SK-N-SH (cell line): ENCODE measurements at regions of chr10 and their contacts with region 1.

Region 1: DNA sequence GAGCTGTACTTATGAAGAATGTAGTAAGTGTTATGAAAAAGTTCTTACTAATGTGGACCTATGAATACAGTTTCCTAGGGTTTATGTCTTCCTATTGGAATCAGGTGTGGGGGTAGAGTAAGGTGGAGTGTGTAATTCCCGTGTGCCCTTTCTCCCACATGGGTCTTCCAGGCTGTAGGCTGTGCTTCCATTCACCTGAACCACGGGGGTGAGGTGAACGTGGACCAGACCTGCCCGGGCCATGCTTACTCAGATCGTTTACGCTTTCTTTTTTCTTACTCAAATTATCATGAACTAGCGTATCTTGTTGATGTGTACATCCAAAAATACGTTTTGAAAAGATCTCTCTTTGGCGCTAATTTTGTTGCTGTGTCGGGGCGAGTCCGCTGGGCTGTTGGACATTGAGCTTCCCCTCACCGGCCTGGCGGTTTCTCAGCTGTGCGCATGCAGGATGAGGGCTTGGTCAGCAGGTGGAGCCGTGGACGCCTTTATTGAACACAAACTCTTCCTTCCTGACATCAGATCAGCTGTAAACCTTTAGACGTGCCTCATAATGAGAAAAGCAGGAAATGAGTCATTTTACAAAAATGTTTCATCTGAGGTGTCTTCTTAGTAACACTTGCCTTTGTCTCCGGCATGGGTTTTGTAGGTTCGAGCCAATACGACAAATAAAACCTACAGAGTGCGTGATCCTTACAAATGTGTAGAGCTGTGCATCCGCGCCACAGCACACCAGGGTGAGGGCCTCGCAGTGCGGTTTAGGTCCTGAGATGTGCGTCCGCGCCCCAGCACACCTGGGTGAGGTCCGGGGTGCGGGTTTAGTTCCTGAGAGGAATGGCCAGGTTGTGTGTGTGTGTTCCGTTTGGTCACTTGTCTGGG is 53.8 kb downstream of the WDR37 start:
- DNase-seq: peak; percentile 88
- H3K4me3 ChIP-seq: peak overlapping the region in 1 of 2 experiments; percentile 14; a peak in 1 of 4 replicates
- H3K27ac ChIP-seq: peak overlapping the region; percentile 25 to 68; a peak in 2 of 4 replicates
- H3K4me1 ChIP-seq: peaks cover 8 to 9% of the 10 kb centered on the region in 2 experiments; a peak in 2 of 4 replicates
- H3K27me3 ChIP-seq: no peaks in the 10 kb centered on the region
- CTCF ChIP-seq: peak; percentile 69
- EP300 ChIP-seq: no peak
- RAD21 ChIP-seq: peak; percentile 89

Region 2: GRCh38 chr10:1097436-1097835 is 12.6 kb before region 1 on chr10:
- CTCF ChIA-PET with region 1: interaction called, 15 read pairs
- POLR2A ChIA-PET with region 1: no interaction called
- DNase-seq: no peak
- H3K4me3 ChIP-seq: no peak overlapping the region
- H3K27ac ChIP-seq: peak overlapping the region in 1 of 2 experiments; percentile 93; a peak in 1 of 4 replicates
- H3K4me1 ChIP-seq: peaks cover 0 to 33% of the 10 kb centered on the region in 2 experiments; a peak in 2 of 4 replicates
- H3K27me3 ChIP-seq: no peaks in the 10 kb centered on the region
- CTCF ChIP-seq: no peak
- EP300 ChIP-seq: no peak
- RAD21 ChIP-seq: no peak

Region 3: DNA sequence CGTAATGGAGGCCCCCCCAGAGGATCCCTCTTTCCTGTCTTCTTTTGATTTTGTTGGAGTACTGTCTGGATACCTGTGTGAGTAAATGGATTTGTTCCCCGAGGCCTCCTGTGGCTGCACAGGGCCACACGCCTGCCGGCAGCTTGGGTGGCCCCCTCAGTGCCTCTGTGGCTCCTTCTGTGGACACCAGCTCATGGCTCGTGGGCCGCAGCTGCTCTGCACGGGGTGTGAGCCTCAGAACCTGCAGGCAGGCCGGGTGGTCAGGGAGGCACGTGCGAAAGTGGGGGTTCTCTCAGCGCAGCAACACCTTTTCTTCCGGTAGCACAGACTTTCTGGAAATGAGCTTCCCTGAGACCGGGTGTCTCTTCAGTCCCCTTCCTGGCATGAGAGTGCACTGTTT is 16.4 kb after region 1 on chr10:
- CTCF ChIA-PET with region 1: interaction called, 12 read pairs
- POLR2A ChIA-PET with region 1: no interaction called
- DNase-seq: no peak
- H3K4me3 ChIP-seq: no peak overlapping the region
- H3K27ac ChIP-seq: no peak overlapping the region
- H3K4me1 ChIP-seq: peaks cover 0 to 7% of the 10 kb centered on the region in 2 experiments; a peak in 1 of 4 replicates
- H3K27me3 ChIP-seq: no peaks in the 10 kb centered on the region
- CTCF ChIP-seq: no peak
- EP300 ChIP-seq: no peak
- RAD21 ChIP-seq: no peak

Region 4: GRCh38 chr10:1297566-1298301 is 187.7 kb after region 1 on chr10:
- CTCF ChIA-PET with region 1: interaction called, 23 read pairs
- POLR2A ChIA-PET with region 1: no interaction called
- DNase-seq: peak; percentile 59
- H3K4me3 ChIP-seq: no peak overlapping the region
- H3K27ac ChIP-seq: peak overlapping the region in 1 of 2 experiments; percentile 100; a peak in 2 of 4 replicates
- H3K4me1 ChIP-seq: peaks cover 0 to 51% of the 10 kb centered on the region in 2 experiments; a peak in 2 of 4 replicates
- H3K27me3 ChIP-seq: no peaks in the 10 kb centered on the region
- CTCF ChIP-seq: no peak
- EP300 ChIP-seq: no peak
- RAD21 ChIP-seq: peak; percentile 44